ENCODE measurements at regions of chr10 and their contacts with region 1.

Region 1: GRCh38 chr10:70537344-70538209 is 59.0 kb downstream of the PALD1 start:
- DNase-seq: peak; percentile 20 to 44 (median 32)
- ATAC-seq: no peak
- H3K4me3 ChIP-seq: no peak overlapping the region
- H3K27ac ChIP-seq: no peak overlapping the region
- H3K4me1 ChIP-seq: no peaks in the 10 kb centered on the region
- H3K27me3 ChIP-seq: no peaks in the 10 kb centered on the region
- CTCF ChIP-seq: peak in 6 of 7 experiments; percentile 14 to 26 (median 20)
- POLR2A ChIP-seq: no peak

Region 2: DNA sequence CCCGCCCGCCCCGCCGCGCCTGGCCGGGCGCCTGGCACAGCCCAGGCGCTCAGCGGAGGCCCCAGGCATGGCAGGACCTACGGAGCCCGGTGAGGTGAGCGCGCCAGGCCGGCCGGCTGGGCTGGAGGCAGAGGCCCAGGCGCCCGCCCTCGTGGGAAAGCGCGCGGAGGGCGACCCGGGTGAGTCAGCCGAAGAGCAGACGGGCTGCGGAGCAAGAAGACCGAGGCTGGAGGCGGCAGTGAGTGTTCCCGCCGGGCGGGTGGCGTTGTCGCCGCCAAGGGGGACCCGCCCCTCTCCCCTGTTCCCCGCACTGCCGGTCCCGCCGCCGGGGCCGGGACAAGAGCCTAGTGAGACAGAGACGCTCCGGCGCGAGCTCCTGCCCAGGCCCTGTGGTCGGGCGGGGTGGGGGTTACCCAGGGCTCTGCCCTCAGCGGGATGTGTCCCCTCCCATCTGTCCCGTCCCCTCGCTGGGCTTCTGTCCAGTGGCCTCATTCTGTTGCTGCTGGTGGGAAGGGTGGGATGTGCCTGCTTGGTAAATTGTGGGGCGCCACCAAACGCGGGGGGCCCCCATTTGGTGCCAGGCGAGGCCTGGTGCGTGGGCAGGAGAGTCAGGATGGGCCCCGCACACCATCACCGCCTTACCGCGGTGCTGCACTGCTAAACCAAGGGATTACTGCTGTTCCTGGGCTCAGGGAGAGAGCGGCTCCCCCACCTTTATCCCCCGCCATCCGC is 79.1 kb before region 1 on chr10:
- intact Hi-C with region 1: loop called (anchors 5 kb)
- DNase-seq: peak; percentile 70 to 89 (median 79)
- ATAC-seq: peak; percentile 68
- H3K4me3 ChIP-seq: no peak overlapping the region
- H3K27ac ChIP-seq: peak overlapping the region in 3 of 4 donors; percentile 38 to 69 (median 57)
- H3K4me1 ChIP-seq: peaks cover 32% of the 10 kb centered on the region
- H3K27me3 ChIP-seq: no peaks in the 10 kb centered on the region
- CTCF ChIP-seq: peak in 1 of 7 experiments; percentile 34
- POLR2A ChIP-seq: peak in 2 of 3 donors; percentile 23 to 39

Region 3: DNA sequence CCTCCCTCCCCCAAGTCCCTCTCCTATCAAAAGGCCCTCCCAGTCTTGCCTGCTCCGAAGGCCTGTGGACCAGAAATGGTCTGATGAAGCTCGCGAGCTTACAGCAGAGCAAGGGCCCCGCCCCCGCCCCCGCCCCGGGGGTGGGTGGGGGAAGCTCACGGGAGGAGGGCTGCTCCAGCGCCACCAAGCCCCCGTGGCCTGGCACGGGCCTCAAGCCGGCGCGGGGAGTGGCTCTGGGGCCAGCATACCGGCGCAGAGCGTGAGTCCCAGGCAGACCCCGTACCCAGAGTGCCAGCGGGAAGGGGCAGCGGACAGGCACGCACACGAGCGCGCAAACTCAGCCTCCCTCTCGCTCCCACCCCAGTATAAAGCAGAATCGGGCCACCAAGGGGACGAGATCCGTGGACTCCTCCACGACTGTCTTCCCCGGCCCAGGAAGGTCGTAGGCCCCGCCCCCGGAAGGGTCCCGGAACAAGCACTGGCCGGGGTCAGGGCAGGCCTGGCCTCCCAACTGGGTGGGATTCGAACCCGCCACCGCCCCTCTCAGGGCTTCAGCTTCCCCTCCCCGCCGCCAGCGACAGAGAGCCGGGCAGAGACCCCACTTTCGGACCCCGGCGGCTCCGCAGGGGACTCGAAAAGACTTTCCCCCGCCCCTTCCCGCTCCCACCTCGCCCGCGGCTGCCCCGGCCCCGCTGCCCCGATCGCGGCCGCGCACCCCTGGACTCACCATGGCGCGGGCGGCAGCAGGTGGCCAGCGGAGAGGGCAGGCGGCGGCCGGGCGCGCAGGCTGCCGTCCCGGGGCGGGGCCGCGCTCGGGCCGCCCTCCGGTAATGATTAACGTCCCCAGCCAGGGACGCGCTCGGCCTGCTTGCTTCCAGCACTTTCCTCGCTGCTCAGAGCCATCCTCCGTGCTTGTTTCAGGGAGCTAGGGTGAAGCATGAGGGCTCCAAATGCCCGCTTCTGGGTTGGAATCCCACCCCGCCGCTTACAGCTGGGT is 350.5 kb after region 1 on chr10 and contains the start of gene PCBD1:
- intact Hi-C with region 1: no loop called
- DNase-seq: peak; percentile 84 to 88 (median 86)
- ATAC-seq: peak; percentile 94
- H3K4me3 ChIP-seq: peak within 1 kb of the TSS; percentile 52 to 60
- H3K27ac ChIP-seq: peak within 1 kb of the TSS; percentile 71 to 96 (median 92)
- H3K4me1 ChIP-seq: peaks cover 46% of the 10 kb centered on the region
- H3K27me3 ChIP-seq: no peaks in the 10 kb centered on the region
- CTCF ChIP-seq: no peak
- POLR2A ChIP-seq: peak; percentile 47 to 70 (median 63)
- total RNA-seq, gene PCBD1: 40.5 to 67.7 TPM